ENCODE measurements at regions of chr1 and their contacts with region 1.

Region 1: GRCh38 chr1:224392411-224393249 is 36.0 kb downstream of the CNIH4 start:
- DNase-seq: no peak
- ATAC-seq: peak in 1 of 4 experiments; percentile 37
- H3K4me3 ChIP-seq: no peak overlapping the region
- H3K4me3 Mint-ChIP-seq: no peak overlapping the region
- H3K27ac ChIP-seq: no peak overlapping the region
- H3K27ac Mint-ChIP-seq: peak overlapping the region in 1 of 2 donors; percentile 40
- H3K4me1 ChIP-seq: peaks cover 0 to 7% of the 10 kb centered on the region in 2 experiments
- H3K4me1 Mint-ChIP-seq: peaks cover 8 to 35% (median 19%) of the 10 kb centered on the region in 3 donors
- H3K27me3 ChIP-seq: no peaks in the 10 kb centered on the region
- H3K27me3 Mint-ChIP-seq: no peaks in the 10 kb centered on the region

Region 2: DNA sequence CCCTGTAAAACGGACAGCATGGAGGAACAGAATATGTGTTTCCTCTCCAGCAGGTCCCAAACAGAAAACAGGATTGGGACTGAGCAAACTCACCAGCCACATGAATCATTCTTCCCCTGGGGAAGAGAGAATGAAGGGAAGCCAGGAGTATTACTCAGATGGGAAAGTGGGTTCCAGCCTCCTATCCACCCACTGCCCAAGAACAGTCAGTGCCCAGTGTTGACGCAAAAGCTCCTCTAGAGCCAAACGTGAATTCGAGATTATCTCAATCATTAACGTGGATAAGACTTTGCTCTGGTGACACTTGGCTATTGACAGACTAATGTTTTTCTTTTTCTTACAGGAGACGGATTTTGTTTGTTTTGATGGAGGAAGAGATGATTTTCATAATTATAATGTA is 1765.4 kb before region 1 on chr1:
- CTCF ChIA-PET with region 1: no interaction called
- POLR2A ChIA-PET with region 1: no interaction called
- DNase-seq: no peak
- ATAC-seq: no peak
- H3K4me3 ChIP-seq: no peak overlapping the region
- H3K4me3 Mint-ChIP-seq: no peak overlapping the region
- H3K27ac ChIP-seq: no peak overlapping the region
- H3K27ac Mint-ChIP-seq: no peak overlapping the region
- H3K4me1 ChIP-seq: no peaks in the 10 kb centered on the region
- H3K4me1 Mint-ChIP-seq: peaks cover 0 to 6% (median 0%) of the 10 kb centered on the region in 3 donors
- H3K27me3 ChIP-seq: no peaks in the 10 kb centered on the region
- H3K27me3 Mint-ChIP-seq: no peaks in the 10 kb centered on the region

Region 3: GRCh38 chr1:224338150-224338838 is 54.3 kb before region 1 on chr1:
- CTCF ChIA-PET with region 1: interaction called in 1 of 2 experiments, 16 read pairs
- POLR2A ChIA-PET with region 1: no interaction called
- DNase-seq: no peak
- ATAC-seq: no peak
- H3K4me3 ChIP-seq: no peak overlapping the region
- H3K4me3 Mint-ChIP-seq: no peak overlapping the region
- H3K27ac ChIP-seq: no peak overlapping the region
- H3K27ac Mint-ChIP-seq: peak overlapping the region in 1 of 2 donors; percentile 48
- H3K4me1 ChIP-seq: peaks cover 0 to 6% of the 10 kb centered on the region in 2 experiments
- H3K4me1 Mint-ChIP-seq: peaks cover 4 to 20% (median 18%) of the 10 kb centered on the region in 3 donors
- H3K27me3 ChIP-seq: peaks cover 0 to 5% of the 10 kb centered on the region in 2 experiments
- H3K27me3 Mint-ChIP-seq: no peaks in the 10 kb centered on the region

Region 4: GRCh38 chr1:224406216-224406615 is 13.6 kb after region 1 on chr1:
- CTCF ChIA-PET with region 1: interaction called in 1 of 2 experiments, 10 read pairs
- POLR2A ChIA-PET with region 1: interaction called in 1 of 2 experiments, 3 read pairs
- DNase-seq: no peak
- ATAC-seq: no peak
- H3K4me3 ChIP-seq: no peak overlapping the region
- H3K4me3 Mint-ChIP-seq: no peak overlapping the region
- H3K27ac ChIP-seq: no peak overlapping the region
- H3K27ac Mint-ChIP-seq: peak overlapping the region; percentile 27 to 41
- H3K4me1 ChIP-seq: peaks cover 0 to 4% of the 10 kb centered on the region in 2 experiments
- H3K4me1 Mint-ChIP-seq: peaks cover 22 to 39% (median 36%) of the 10 kb centered on the region in 3 donors
- H3K27me3 ChIP-seq: no peaks in the 10 kb centered on the region
- H3K27me3 Mint-ChIP-seq: no peaks in the 10 kb centered on the region

Region 5: GRCh38 chr1:224411766-224412165 is 19.1 kb after region 1 on chr1:
- CTCF ChIA-PET with region 1: interaction called in 1 of 2 experiments, 4 read pairs
- POLR2A ChIA-PET with region 1: interaction called, 6 to 12 read pairs
- DNase-seq: no peak
- ATAC-seq: no peak
- H3K4me3 ChIP-seq: no peak overlapping the region
- H3K4me3 Mint-ChIP-seq: no peak overlapping the region
- H3K27ac ChIP-seq: no peak overlapping the region
- H3K27ac Mint-ChIP-seq: peak overlapping the region; percentile 19 to 72
- H3K4me1 ChIP-seq: peaks cover 0 to 4% of the 10 kb centered on the region in 2 experiments
- H3K4me1 Mint-ChIP-seq: peaks cover 11 to 35% (median 30%) of the 10 kb centered on the region in 3 donors
- H3K27me3 ChIP-seq: no peaks in the 10 kb centered on the region
- H3K27me3 Mint-ChIP-seq: no peaks in the 10 kb centered on the region

Region 6: DNA sequence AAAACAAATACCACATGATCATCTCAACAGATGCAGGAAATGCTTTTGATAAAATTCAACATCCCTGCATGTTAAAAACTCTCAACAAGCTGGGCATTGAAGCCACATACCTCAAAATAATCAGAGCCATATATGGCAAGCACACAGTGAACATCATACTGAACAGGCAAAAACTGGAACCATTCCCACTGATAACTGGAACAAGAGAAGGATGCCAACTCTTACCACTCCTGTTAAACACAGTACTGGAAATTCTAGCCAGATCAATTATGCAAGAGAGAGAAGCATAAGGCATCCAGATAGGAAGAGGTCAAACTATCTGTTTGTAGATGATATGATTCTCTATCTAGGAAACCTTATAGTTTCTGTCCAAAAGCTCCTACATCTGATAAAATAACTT is 628.4 kb after region 1 on chr1:
- CTCF ChIA-PET with region 1: no interaction called
- POLR2A ChIA-PET with region 1: no interaction called
- DNase-seq: no peak
- ATAC-seq: no peak
- H3K4me3 ChIP-seq: no peak overlapping the region
- H3K4me3 Mint-ChIP-seq: no peak overlapping the region
- H3K27ac ChIP-seq: no peak overlapping the region
- H3K27ac Mint-ChIP-seq: no peak overlapping the region
- H3K4me1 ChIP-seq: no peaks in the 10 kb centered on the region
- H3K4me1 Mint-ChIP-seq: no peaks in the 10 kb centered on the region
- H3K27me3 ChIP-seq: peaks cover 0 to 5% of the 10 kb centered on the region in 2 experiments
- H3K27me3 Mint-ChIP-seq: peaks cover 8 to 17% of the 10 kb centered on the region in 2 donors